Caco-2 (cell line): ENCODE measurements at regions of chr10 and their contacts with region 1.

Region 1: DNA sequence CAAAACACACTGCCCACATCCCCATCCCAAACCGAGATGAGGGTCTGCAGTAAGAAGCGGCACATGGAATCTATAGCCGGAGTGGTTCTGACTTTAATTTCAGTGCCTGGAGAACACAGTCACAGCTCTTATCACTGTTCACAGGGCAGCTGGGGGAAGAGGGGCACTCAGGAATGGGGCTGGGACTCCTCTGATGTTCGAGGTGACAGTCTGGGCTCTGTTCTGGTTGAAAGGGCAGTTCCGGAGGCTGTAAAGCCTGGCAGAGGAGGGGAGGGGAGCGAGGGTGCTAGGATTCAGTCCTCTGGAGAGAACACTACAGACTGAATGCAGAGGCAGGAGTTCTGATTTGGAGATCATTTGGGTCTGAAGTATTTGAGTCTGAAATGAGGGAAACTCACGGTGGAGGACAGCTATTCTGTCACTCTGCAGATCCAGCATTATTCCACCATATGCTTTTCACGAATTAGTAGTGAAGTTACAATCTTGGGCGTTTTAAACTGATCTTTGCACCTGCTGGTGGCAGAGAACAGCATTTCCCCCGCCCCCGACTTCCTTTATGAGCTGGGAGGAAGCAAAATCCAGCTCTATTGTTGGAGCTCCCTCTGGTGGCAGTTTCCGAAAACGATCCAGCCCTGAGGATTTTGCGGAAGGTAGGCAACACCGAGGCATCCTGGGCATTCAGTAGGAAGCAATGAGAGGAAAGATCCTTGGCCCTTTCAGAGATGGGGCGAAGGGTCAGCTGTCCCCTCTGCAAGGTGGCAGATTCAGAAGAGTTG is 22.7 kb upstream of the KCNK18 start:
- DNase-seq: peak; percentile 83 to 89
- H3K4me3 ChIP-seq: peak overlapping the region; percentile 67
- H3K4me3 Mint-ChIP-seq: peak overlapping the region; percentile 79
- H3K27ac Mint-ChIP-seq: no peak overlapping the region
- H3K4me1 ChIP-seq: no peaks in the 10 kb centered on the region; the same call in 1 of the 2 replicates
- H3K4me1 Mint-ChIP-seq: peaks cover 7% of the 10 kb centered on the region
- H3K27me3 ChIP-seq: peaks cover 2% of the 10 kb centered on the region; the same call in 1 of the 2 replicates
- H3K27me3 Mint-ChIP-seq: peaks cover 13% of the 10 kb centered on the region
- CTCF ChIP-seq: peak; percentile 81 to 85

Region 2: GRCh38 chr10:116627386-116627933 is 547.2 kb before region 1 on chr10:
- CTCF ChIA-PET with region 1: interaction called, 3 read pairs
- POLR2A ChIA-PET with region 1: no interaction called
- intact Hi-C with region 1: loop called (anchors 10 kb)
- DNase-seq: peak; percentile 58 to 81
- H3K4me3 ChIP-seq: peak overlapping the region; percentile 58
- H3K4me3 Mint-ChIP-seq: peak overlapping the region; percentile 29
- H3K27ac Mint-ChIP-seq: no peak overlapping the region
- H3K4me1 ChIP-seq: no peaks in the 10 kb centered on the region
- H3K4me1 Mint-ChIP-seq: no peaks in the 10 kb centered on the region
- H3K27me3 ChIP-seq: no peaks in the 10 kb centered on the region
- H3K27me3 Mint-ChIP-seq: no peaks in the 10 kb centered on the region
- CTCF ChIP-seq: peak; percentile 68 to 80

Region 3: DNA sequence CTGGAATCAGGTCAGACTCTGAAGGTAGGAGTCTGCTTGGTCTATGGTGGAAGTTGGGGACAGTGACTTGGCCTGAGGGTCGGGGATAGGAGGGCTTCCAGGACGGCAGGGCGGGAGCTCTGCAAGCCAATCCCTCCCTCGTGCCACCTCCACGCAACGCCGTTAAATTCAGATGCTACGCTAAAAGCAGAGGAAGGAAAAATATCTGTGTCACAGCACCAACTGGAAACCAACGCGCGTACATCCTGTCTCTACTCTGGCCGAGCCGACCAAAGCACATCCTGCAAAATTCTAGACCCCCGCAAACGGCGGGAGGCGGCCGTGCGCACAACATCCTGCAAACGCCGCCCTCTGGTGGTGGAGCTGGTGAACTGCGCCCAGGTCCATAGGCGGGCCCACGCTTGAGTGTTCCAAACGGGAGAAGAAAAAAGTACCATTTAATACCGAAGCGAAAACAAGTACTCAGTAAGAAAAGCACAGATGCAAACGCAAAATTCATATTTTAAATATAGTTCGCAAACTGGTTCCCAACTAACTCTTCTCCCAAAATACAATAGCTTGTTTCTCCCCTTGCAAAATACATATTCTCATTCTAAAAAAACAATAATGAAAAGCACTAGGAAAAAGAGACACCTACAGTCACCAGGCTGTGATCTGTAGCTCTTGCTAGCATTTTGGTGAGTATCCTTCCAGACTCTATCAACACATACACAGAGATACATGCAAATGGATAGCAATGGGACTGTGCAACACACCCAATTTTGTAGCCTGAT is 386.5 kb before region 1 on chr10:
- CTCF ChIA-PET with region 1: interaction called, 18 read pairs
- POLR2A ChIA-PET with region 1: no interaction called
- intact Hi-C with region 1: no loop called
- DNase-seq: peak; percentile 70 to 86
- H3K4me3 ChIP-seq: peak overlapping the region; percentile 25; the same call in 1 of the 2 replicates
- H3K4me3 Mint-ChIP-seq: peak overlapping the region; percentile 53
- H3K27ac Mint-ChIP-seq: no peak overlapping the region
- H3K4me1 ChIP-seq: 0 out of 2 replicates have a peak, but pooled peaks cover 4% of the 10 kb centered on the region
- H3K4me1 Mint-ChIP-seq: no peaks in the 10 kb centered on the region
- H3K27me3 ChIP-seq: no peaks in the 10 kb centered on the region
- H3K27me3 Mint-ChIP-seq: peaks cover 11% of the 10 kb centered on the region
- CTCF ChIP-seq: peak; percentile 95 to 96

Region 4: GRCh38 chr10:116836902-116837523 is 337.6 kb before region 1 on chr10:
- CTCF ChIA-PET with region 1: interaction called, 22 read pairs
- POLR2A ChIA-PET with region 1: no interaction called
- intact Hi-C with region 1: loop called (anchors 2 kb)
- DNase-seq: no peak
- H3K4me3 ChIP-seq: no peak overlapping the region
- H3K4me3 Mint-ChIP-seq: no peak overlapping the region
- H3K27ac Mint-ChIP-seq: no peak overlapping the region
- H3K4me1 ChIP-seq: 0 out of 2 replicates have a peak, but pooled peaks cover 15% of the 10 kb centered on the region
- H3K4me1 Mint-ChIP-seq: no peaks in the 10 kb centered on the region
- H3K27me3 ChIP-seq: no peaks in the 10 kb centered on the region
- H3K27me3 Mint-ChIP-seq: no peaks in the 10 kb centered on the region
- CTCF ChIP-seq: peak in 1 of 2 experiments; percentile 26

Region 5: GRCh38 chr10:116888380-116889055 is 286.1 kb before region 1 on chr10:
- CTCF ChIA-PET with region 1: interaction called, 10 read pairs
- POLR2A ChIA-PET with region 1: no interaction called
- intact Hi-C with region 1: no loop called
- DNase-seq: peak; percentile 49 to 60
- H3K4me3 ChIP-seq: no peak overlapping the region
- H3K4me3 Mint-ChIP-seq: no peak overlapping the region
- H3K27ac Mint-ChIP-seq: peak overlapping the region; percentile 51
- H3K4me1 ChIP-seq: peaks cover 16% of the 10 kb centered on the region
- H3K4me1 Mint-ChIP-seq: peaks cover 19% of the 10 kb centered on the region
- H3K27me3 ChIP-seq: no peaks in the 10 kb centered on the region
- H3K27me3 Mint-ChIP-seq: no peaks in the 10 kb centered on the region
- CTCF ChIP-seq: no peak

Region 6: GRCh38 chr10:117186832-117187615 is 12.4 kb after region 1 on chr10:
- CTCF ChIA-PET with region 1: interaction called, 26 read pairs
- POLR2A ChIA-PET with region 1: interaction called, 3 read pairs
- intact Hi-C with region 1: no loop called
- DNase-seq: no peak
- H3K4me3 ChIP-seq: no peak overlapping the region
- H3K4me3 Mint-ChIP-seq: no peak overlapping the region
- H3K27ac Mint-ChIP-seq: no peak overlapping the region
- H3K4me1 ChIP-seq: peaks cover 6% of the 10 kb centered on the region; the same call in 1 of the 2 replicates
- H3K4me1 Mint-ChIP-seq: peaks cover 6% of the 10 kb centered on the region
- H3K27me3 ChIP-seq: no peaks in the 10 kb centered on the region
- H3K27me3 Mint-ChIP-seq: no peaks in the 10 kb centered on the region
- CTCF ChIP-seq: no peak